CD8-positive, alpha-beta T cell (primary cell): ENCODE measurements at regions of chr3 and their contacts with region 1.

Region 1: GRCh38 chr3:120369000-120369399 is 19.8 kb upstream of the LRRC58 start:
- DNase-seq: no peak
- ATAC-seq: no peak
- H3K4me3 ChIP-seq: no peak overlapping the region
- H3K4me3 Mint-ChIP-seq: no peak overlapping the region
- H3K27ac ChIP-seq: no peak overlapping the region
- H3K27ac Mint-ChIP-seq: no peak overlapping the region
- H3K4me1 ChIP-seq: no peaks in the 10 kb centered on the region
- H3K4me1 Mint-ChIP-seq: no peaks in the 10 kb centered on the region
- H3K27me3 ChIP-seq: no peaks in the 10 kb centered on the region
- H3K27me3 Mint-ChIP-seq: peaks cover 11% of the 10 kb centered on the region
- CTCF ChIP-seq: no peak

Region 2: GRCh38 chr3:120404876-120405275 is 35.9 kb after region 1 on chr3:
- CTCF ChIA-PET with region 1: no interaction called
- POLR2A ChIA-PET with region 1: no interaction called
- intact Hi-C with region 1: loop called in 1 of 2 experiments (anchors 1 kb)
- DNase-seq: no peak
- ATAC-seq: no peak
- H3K4me3 ChIP-seq: no peak overlapping the region
- H3K4me3 Mint-ChIP-seq: no peak overlapping the region
- H3K27ac ChIP-seq: no peak overlapping the region
- H3K27ac Mint-ChIP-seq: no peak overlapping the region
- H3K4me1 ChIP-seq: no peaks in the 10 kb centered on the region
- H3K4me1 Mint-ChIP-seq: no peaks in the 10 kb centered on the region
- H3K27me3 ChIP-seq: no peaks in the 10 kb centered on the region
- H3K27me3 Mint-ChIP-seq: no peaks in the 10 kb centered on the region
- CTCF ChIP-seq: no peak

Region 3: DNA sequence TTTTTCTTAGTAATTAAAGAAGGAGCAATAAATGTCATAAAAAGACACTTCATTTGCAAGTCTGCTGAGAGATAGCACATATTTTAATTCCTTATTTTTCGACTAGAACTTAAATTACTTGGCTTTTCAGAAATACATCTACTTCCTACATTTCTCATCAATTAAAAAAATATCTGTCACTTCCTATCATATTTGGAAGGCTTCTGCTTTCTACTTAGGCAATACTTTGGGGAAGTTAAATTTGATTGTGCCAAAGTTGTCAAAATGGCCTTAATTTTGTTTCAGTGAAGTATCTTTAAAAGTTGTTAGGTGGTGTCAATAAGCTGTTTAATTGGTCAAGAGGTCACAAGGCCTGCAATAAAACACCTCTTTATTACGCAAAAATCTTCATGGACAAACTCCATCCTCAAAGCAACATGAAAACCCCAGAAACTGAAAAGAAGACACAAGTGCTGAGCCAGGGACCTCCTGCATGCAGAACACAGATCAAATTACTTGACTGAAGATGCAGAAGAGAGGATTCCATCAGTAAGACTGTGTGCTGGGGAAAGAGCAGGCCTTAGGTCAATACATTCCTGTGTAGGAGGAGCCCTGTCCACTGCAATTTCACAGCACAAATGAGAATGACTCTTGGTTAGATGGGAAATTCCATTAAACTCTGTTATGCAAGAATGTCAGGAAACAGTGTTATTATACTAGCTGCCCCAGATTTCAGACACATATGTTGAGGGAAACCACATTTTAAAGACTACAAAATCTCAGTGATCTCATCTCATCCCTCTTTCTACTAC is 129.8 kb after region 1 on chr3:
- CTCF ChIA-PET with region 1: no interaction called
- POLR2A ChIA-PET with region 1: no interaction called
- intact Hi-C with region 1: no loop called
- DNase-seq: no peak
- ATAC-seq: no peak
- H3K4me3 ChIP-seq: no peak overlapping the region
- H3K4me3 Mint-ChIP-seq: no peak overlapping the region
- H3K27ac ChIP-seq: no peak overlapping the region
- H3K27ac Mint-ChIP-seq: no peak overlapping the region
- H3K4me1 ChIP-seq: no peaks in the 10 kb centered on the region
- H3K4me1 Mint-ChIP-seq: no peaks in the 10 kb centered on the region
- H3K27me3 ChIP-seq: no peaks in the 10 kb centered on the region
- H3K27me3 Mint-ChIP-seq: peaks cover 6% of the 10 kb centered on the region
- CTCF ChIP-seq: no peak